K562 (cell line): ENCODE measurements at regions of chr17 and their contacts with region 1.

Region 1: GRCh38 chr17:37417852-37418251 is 11.2 kb downstream of the TADA2A start:
- DNase-seq: no peak
- ATAC-seq: no peak
- H3K4me3 ChIP-seq: no peak overlapping the region
- H3K27ac ChIP-seq: no peak overlapping the region
- H3K4me1 ChIP-seq: no peaks in the 10 kb centered on the region; a peak in 1 of 5 replicates
- H3K27me3 ChIP-seq: no peaks in the 10 kb centered on the region
- CTCF ChIP-seq: no peak
- EP300 ChIP-seq: no peak
- POLR2A ChIP-seq: no peak
- RAD21 ChIP-seq: no peak

Region 2: GRCh38 chr17:37024181-37024637 is 393.6 kb before region 1 on chr17:
- CTCF ChIA-PET with region 1: no interaction called
- POLR2A ChIA-PET with region 1: no interaction called
- in situ Hi-C with region 1: no loop called
- intact Hi-C with region 1: no loop called
- DNase-seq: no peak
- ATAC-seq: no peak
- H3K4me3 ChIP-seq: no peak overlapping the region
- H3K27ac ChIP-seq: no peak overlapping the region
- H3K4me1 ChIP-seq: no peaks in the 10 kb centered on the region
- H3K27me3 ChIP-seq: no peaks in the 10 kb centered on the region
- CTCF ChIP-seq: no peak
- EP300 ChIP-seq: no peak
- POLR2A ChIP-seq: no peak
- RAD21 ChIP-seq: no peak

Region 3: DNA sequence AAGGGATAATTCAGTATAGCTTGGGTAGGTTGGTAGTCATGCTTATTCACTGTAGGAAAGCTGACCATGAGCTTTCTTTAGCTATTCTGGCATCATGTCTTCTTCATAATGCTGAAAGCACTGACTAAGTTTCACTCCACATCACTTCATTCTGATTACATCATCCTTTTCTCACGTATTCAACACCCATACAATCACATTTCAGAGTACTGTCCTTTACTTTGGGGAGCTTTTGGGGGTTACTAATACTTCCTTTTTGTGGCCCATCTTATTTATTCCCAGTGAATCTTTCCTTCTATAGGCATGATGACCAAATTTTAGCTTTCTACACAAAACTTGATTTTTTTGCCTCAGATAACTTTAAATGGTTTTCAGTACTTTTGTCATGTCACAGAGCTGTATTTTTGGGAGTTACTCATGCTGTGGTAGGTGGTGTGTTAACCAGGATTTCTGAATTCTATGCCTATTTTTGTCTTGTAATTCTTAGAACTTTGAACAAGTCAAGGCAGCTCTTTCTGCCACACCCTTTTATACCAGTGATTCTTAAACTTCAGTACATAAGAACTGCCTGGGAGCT is 12.3 kb after region 1 on chr17:
- CTCF ChIA-PET with region 1: no interaction called
- POLR2A ChIA-PET with region 1: interaction called, 12 read pairs
- in situ Hi-C with region 1: no loop called
- intact Hi-C with region 1: no loop called
- DNase-seq: peak in 2 of 4 experiments; percentile 22 to 23
- ATAC-seq: peak; percentile 85
- H3K4me3 ChIP-seq: no peak overlapping the region
- H3K27ac ChIP-seq: peak overlapping the region; percentile 34
- H3K4me1 ChIP-seq: peaks cover 5 to 11% of the 10 kb centered on the region in 2 experiments; a peak in 3 of 5 replicates
- H3K27me3 ChIP-seq: no peaks in the 10 kb centered on the region
- CTCF ChIP-seq: no peak
- EP300 ChIP-seq: no peak
- POLR2A ChIP-seq: no peak
- RAD21 ChIP-seq: no peak

Region 4: GRCh38 chr17:37701496-37701898 is 283.6 kb after region 1 on chr17:
- CTCF ChIA-PET with region 1: no interaction called
- POLR2A ChIA-PET with region 1: no interaction called
- in situ Hi-C with region 1: no loop called
- intact Hi-C with region 1: no loop called
- DNase-seq: peak; percentile 41 to 59 (median 56)
- ATAC-seq: peak; percentile 79
- H3K4me3 ChIP-seq: no peak overlapping the region
- H3K27ac ChIP-seq: no peak overlapping the region
- H3K4me1 ChIP-seq: no peaks in the 10 kb centered on the region
- H3K27me3 ChIP-seq: peaks cover 2 to 43% of the 10 kb centered on the region in 2 experiments
- CTCF ChIP-seq: peak; percentile 64 to 82 (median 79)
- EP300 ChIP-seq: no peak
- POLR2A ChIP-seq: no peak
- RAD21 ChIP-seq: peak; percentile 38 to 65